ENCODE measurements at regions of chr17 and their contacts with region 1.

Region 1: DNA sequence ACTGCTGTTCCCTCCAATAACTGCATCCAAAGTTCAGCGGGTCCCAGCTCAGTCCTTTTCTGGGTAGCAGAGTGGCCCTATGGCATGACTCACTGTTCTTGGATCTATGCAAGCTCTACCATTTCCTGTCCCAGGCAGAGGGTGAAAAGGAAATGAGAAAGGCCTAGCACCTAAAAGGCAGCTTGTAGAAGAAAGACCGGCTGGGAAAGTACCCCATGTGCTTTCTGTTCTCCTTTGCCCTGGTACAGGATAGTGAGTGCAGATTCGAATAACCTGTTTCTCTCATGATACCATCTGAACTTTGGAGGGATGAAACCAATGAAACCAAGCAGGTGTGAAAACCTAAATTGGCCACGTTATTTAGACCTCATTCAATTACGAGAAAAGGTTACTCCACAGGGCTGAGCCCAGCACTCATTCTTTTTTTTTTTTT is 12.7 kb upstream of the HASPIN start:
- DNase-seq: peak; percentile 85 to 94 (median 86)
- H3K4me3 ChIP-seq: peak overlapping the region in 1 of 2 donors; percentile 39
- H3K4me3 Mint-ChIP-seq: peak overlapping the region; percentile 20 to 78 (median 75)
- H3K27ac ChIP-seq: peak overlapping the region; percentile 33
- H3K27ac Mint-ChIP-seq: peak overlapping the region; percentile 86 to 92 (median 90)
- H3K4me1 ChIP-seq: peaks cover 30% of the 10 kb centered on the region
- H3K4me1 Mint-ChIP-seq: peaks cover 33 to 41% (median 37%) of the 10 kb centered on the region in 4 donors
- H3K27me3 ChIP-seq: no peaks in the 10 kb centered on the region
- H3K27me3 Mint-ChIP-seq: no peaks in the 10 kb centered on the region

Region 2: GRCh38 chr17:3636154-3636907 is 74.6 kb before region 1 on chr17 and contains the starts of genes CTNS and SHPK:
- CTCF ChIA-PET with region 1: no interaction called
- POLR2A ChIA-PET with region 1: interaction called, 6 read pairs
- intact Hi-C with region 1: loop called (anchors 5 kb)
- DNase-seq: peak; percentile 93 to 97 (median 94)
- H3K4me3 ChIP-seq: peak within 1 kb of the TSS; percentile 73 to 99
- H3K4me3 Mint-ChIP-seq: peak within 1 kb of the TSS; percentile 96 to 100 (median 98)
- H3K27ac ChIP-seq: peak within 1 kb of the TSS; percentile 98
- H3K27ac Mint-ChIP-seq: peak within 1 kb of the TSS; percentile 97 to 100 (median 100)
- H3K4me1 ChIP-seq: peaks cover 11% of the 10 kb centered on the region
- H3K4me1 Mint-ChIP-seq: peaks cover 12 to 37% (median 24%) of the 10 kb centered on the region in 4 donors
- H3K27me3 ChIP-seq: no peaks in the 10 kb centered on the region
- H3K27me3 Mint-ChIP-seq: no peaks in the 10 kb centered on the region
- total RNA-seq, gene CTNS: 11.6 to 12.0 TPM
- total RNA-seq, gene SHPK: 10.7 to 11.6 TPM

Region 3: GRCh38 chr17:3668279-3669085 is 42.5 kb before region 1 on chr17 and contains the starts of genes EMC6 and TAX1BP3:
- CTCF ChIA-PET with region 1: no interaction called
- POLR2A ChIA-PET with region 1: no interaction called
- intact Hi-C with region 1: loop called (anchors 1 kb)
- DNase-seq: peak; percentile 97 to 100 (median 99)
- H3K4me3 ChIP-seq: peak within 1 kb of the TSS; percentile 76 to 83
- H3K4me3 Mint-ChIP-seq: peak within 1 kb of the TSS; percentile 88 to 96 (median 92)
- H3K27ac ChIP-seq: peak within 1 kb of the TSS; percentile 80
- H3K27ac Mint-ChIP-seq: peak within 1 kb of the TSS; percentile 84 to 95 (median 90)
- H3K4me1 ChIP-seq: peaks cover 23% of the 10 kb centered on the region
- H3K4me1 Mint-ChIP-seq: peaks cover 18 to 30% (median 19%) of the 10 kb centered on the region in 4 donors
- H3K27me3 ChIP-seq: no peaks in the 10 kb centered on the region
- H3K27me3 Mint-ChIP-seq: no peaks in the 10 kb centered on the region
- total RNA-seq, gene EMC6: 27.8 to 29.4 TPM
- total RNA-seq, gene TAX1BP3: 12.7 to 13.2 TPM

Region 4: GRCh38 chr17:3683054-3683511 is 27.9 kb before region 1 on chr17:
- CTCF ChIA-PET with region 1: interaction called, 13 read pairs
- POLR2A ChIA-PET with region 1: interaction called, 4 read pairs
- intact Hi-C with region 1: no loop called
- DNase-seq: peak in 4 of 5 donors; percentile 55 to 62 (median 58)
- H3K4me3 ChIP-seq: no peak overlapping the region
- H3K4me3 Mint-ChIP-seq: peak overlapping the region in 1 of 8 donors; percentile 21
- H3K27ac ChIP-seq: no peak overlapping the region
- H3K27ac Mint-ChIP-seq: peak overlapping the region in 2 of 7 donors; percentile 65 to 70
- H3K4me1 ChIP-seq: peaks cover 9% of the 10 kb centered on the region
- H3K4me1 Mint-ChIP-seq: peaks cover 6 to 25% (median 7%) of the 10 kb centered on the region in 4 donors
- H3K27me3 ChIP-seq: no peaks in the 10 kb centered on the region
- H3K27me3 Mint-ChIP-seq: no peaks in the 10 kb centered on the region

Region 5: DNA sequence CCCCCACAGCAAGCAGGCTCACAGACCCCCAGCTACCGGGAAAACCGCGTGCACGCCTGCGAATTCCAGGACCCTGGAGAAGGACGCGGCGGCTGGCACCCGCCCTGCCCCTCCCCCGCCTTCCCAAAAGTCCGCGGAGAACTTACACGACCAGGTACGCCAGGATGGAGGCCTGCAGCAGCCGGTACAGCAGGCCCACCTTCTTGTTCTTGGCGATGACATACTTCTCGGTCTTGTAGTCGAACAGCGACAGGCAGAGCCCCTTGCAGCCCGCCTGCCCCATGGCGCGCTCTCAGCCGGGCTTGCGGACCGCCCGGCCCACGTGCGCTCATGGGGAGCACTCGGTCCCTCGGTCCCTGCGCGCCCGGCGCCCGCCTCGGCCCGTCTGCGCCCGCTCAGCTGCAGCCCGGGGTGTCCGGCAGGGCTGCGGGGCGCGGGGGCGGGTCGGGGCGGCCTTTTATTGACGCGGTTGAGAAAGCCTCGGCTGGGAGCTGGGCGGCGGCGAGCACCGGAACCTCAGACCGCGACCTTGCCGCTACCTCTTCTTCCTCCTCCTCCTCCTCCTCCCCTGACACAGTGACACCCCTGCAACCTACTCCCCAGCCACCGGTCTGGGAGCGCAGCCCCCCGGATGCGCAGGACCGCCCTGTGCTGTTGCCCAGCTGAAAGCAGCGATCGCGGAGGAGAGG is 15.1 kb before region 1 on chr17 and contains the start of gene P2RX5:
- CTCF ChIA-PET with region 1: interaction called, 6 read pairs
- POLR2A ChIA-PET with region 1: interaction called, 34 read pairs
- intact Hi-C with region 1: loop called (anchors 1 kb)
- DNase-seq: peak; percentile 32 to 44 (median 37)
- H3K4me3 ChIP-seq: peak within 1 kb of the TSS; percentile 42 to 74
- H3K4me3 Mint-ChIP-seq: peak within 1 kb of the TSS; percentile 94 to 98 (median 96)
- H3K27ac ChIP-seq: peak within 1 kb of the TSS; percentile 48
- H3K27ac Mint-ChIP-seq: peak within 1 kb of the TSS; percentile 35 to 95 (median 87)
- H3K4me1 ChIP-seq: peaks cover 20% of the 10 kb centered on the region
- H3K4me1 Mint-ChIP-seq: peaks cover 8 to 36% (median 20%) of the 10 kb centered on the region in 4 donors
- H3K27me3 ChIP-seq: no peaks in the 10 kb centered on the region
- H3K27me3 Mint-ChIP-seq: no peaks in the 10 kb centered on the region
- total RNA-seq, gene P2RX5: 13.8 to 16.0 TPM

Region 6: DNA sequence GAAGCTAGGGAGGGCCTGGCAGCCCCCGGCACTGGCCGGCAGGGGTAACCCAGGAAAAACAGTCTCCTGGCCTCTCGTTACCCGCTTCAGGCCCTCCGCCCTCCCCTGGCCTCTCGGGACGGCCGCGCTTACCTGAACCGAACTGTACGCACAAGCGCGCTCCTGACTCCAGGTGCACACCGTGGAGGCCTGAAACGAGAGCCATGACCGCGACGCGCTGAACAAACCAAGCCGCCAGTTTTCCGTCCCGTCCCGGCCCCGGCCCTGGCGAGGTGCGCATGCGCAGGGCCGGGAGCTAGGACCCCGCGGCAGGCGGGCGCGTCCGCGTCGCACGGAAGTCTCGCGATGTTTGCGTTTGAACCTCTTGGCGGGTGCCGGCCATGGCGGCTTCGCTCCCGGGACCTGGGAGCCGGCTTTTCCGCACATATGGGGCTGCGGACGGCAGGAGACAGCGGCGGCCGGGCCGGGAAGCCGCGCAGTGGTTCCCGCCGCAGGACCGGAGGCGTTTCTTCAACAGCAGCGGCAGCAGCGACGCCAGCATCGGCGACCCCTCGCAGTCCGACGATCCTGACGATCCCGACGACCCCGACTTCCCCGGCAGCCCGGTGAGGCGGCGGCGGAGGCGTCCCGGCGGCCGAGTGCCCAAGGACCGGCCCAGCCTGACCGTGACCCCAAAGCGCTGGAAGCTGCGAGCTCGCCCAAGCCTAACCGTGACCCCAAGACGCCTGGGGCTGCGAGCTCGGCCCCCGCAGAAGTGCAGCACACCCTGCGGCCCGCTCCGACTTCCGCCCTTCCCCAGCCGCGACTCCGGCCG is 12.8 kb after region 1 on chr17 and contains the start of gene HASPIN:
- CTCF ChIA-PET with region 1: interaction called, 7 read pairs
- POLR2A ChIA-PET with region 1: interaction called, 39 read pairs
- intact Hi-C with region 1: loop called (anchors 1 kb)
- DNase-seq: peak; percentile 88 to 92 (median 91)
- H3K4me3 ChIP-seq: peak within 1 kb of the TSS; percentile 59 to 95
- H3K4me3 Mint-ChIP-seq: peak within 1 kb of the TSS; percentile 86 to 95 (median 94)
- H3K27ac ChIP-seq: peak within 1 kb of the TSS; percentile 74
- H3K27ac Mint-ChIP-seq: peak within 1 kb of the TSS; percentile 75 to 95 (median 93)
- H3K4me1 ChIP-seq: peaks cover 36% of the 10 kb centered on the region
- H3K4me1 Mint-ChIP-seq: peaks cover 15 to 44% (median 28%) of the 10 kb centered on the region in 4 donors
- H3K27me3 ChIP-seq: no peaks in the 10 kb centered on the region
- H3K27me3 Mint-ChIP-seq: no peaks in the 10 kb centered on the region
- total RNA-seq, gene HASPIN: 0.28 to 0.41 TPM

Region 7: DNA sequence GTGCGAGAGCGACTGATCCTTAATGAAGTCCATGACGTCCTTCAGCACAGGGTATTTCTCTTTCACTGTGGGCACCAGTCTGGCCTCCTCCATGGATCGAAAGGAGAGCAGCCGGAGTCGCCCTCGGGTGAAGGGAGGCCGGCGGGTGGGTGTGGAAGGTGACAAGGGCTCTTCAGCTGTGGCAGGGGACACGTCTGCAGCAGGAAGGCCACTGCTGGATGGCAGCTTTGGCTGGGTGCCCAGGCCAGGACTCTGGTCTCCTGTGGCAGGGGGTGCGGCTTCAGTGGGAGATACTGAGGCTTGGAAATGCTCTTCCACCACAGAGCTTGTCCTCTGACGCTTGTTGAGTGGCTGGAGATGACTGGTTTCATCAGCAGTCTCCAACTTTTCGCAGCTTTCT is 353.4 kb after region 1 on chr17:
- CTCF ChIA-PET with region 1: no interaction called
- POLR2A ChIA-PET with region 1: no interaction called
- intact Hi-C with region 1: no loop called
- DNase-seq: no peak
- H3K4me3 ChIP-seq: no peak overlapping the region
- H3K4me3 Mint-ChIP-seq: no peak overlapping the region
- H3K27ac ChIP-seq: no peak overlapping the region
- H3K27ac Mint-ChIP-seq: no peak overlapping the region
- H3K4me1 ChIP-seq: no peaks in the 10 kb centered on the region
- H3K4me1 Mint-ChIP-seq: no peaks in the 10 kb centered on the region
- H3K27me3 ChIP-seq: no peaks in the 10 kb centered on the region
- H3K27me3 Mint-ChIP-seq: no peaks in the 10 kb centered on the region